ENCODE measurements at regions of chr2 and their contacts with region 1.

Region 1: GRCh38 chr2:105744091-105744908 is 412 bp upstream of the NCK2 start:
- DNase-seq: peak; percentile 82
- ATAC-seq: peak; percentile 90
- H3K4me3 ChIP-seq: peak overlapping the region; percentile 42 to 63 (median 43)
- H3K4me3 Mint-ChIP-seq: peak overlapping the region; percentile 87
- H3K27ac ChIP-seq: peak overlapping the region; percentile 69 to 75
- H3K27ac Mint-ChIP-seq: peak overlapping the region; percentile 92
- H3K4me1 ChIP-seq: peaks cover 56 to 61% of the 10 kb centered on the region in 2 donors
- H3K4me1 Mint-ChIP-seq: peaks cover 71% of the 10 kb centered on the region
- H3K27me3 ChIP-seq: no peaks in the 10 kb centered on the region
- H3K27me3 Mint-ChIP-seq: no peaks in the 10 kb centered on the region
- CTCF ChIP-seq: no peak

Region 2: DNA sequence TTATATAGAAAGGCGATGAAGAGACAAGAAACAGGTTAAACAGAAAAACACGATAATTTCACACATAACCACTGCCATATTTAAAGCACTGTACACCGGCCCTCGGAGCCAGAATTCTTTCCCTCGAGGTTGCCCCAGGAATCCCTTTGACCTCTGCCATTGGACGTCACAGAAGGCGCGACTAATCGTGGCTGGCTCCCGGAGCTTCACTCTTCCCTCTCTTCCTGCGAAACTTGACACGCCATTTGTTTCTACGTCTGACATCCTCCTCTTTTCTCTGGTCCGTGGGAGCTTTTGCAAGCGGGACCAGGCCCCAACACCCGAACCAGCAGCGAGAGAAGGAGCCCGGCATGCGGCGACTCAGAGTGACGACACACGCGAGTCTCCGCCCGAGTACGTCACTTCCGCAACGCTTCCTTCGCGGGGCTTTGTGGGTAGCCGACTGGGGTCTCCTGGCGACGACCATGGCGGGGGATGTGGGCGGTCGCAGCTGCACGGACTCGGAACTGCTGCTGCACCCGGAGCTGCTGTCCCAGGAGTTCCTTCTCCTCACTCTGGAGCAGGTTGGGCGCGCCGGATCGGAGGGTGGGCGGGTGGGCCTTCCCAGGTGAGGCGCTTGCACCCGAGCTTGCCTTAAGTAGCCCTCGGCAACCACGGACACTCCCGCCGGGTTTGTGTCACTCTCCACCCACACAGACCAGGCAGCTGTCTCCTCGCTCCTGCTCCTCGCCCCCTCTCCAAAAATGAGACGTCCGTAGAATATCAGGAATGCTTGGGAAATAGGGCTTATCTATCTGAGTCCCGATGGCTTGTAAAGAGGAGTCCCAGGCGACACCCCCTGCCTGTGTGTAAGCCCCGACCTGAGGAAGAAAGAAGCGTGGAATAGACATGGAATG is 406.9 kb before region 1 on chr2 and contains the start of gene C2orf49:
- CTCF ChIA-PET with region 1: no interaction called
- POLR2A ChIA-PET with region 1: no interaction called
- intact Hi-C with region 1: loop called (anchors 10 kb)
- DNase-seq: peak; percentile 95
- ATAC-seq: peak; percentile 93
- H3K4me3 ChIP-seq: peak within 1 kb of the TSS; percentile 84 to 95 (median 86)
- H3K4me3 Mint-ChIP-seq: peak within 1 kb of the TSS; percentile 100
- H3K27ac ChIP-seq: peak within 1 kb of the TSS; percentile 92 to 98
- H3K27ac Mint-ChIP-seq: peak within 1 kb of the TSS; percentile 99
- H3K4me1 ChIP-seq: peaks cover 17 to 21% of the 10 kb centered on the region in 2 donors
- H3K4me1 Mint-ChIP-seq: peaks cover 27% of the 10 kb centered on the region
- H3K27me3 ChIP-seq: no peaks in the 10 kb centered on the region
- H3K27me3 Mint-ChIP-seq: no peaks in the 10 kb centered on the region
- CTCF ChIP-seq: no peak
- total RNA-seq, gene C2orf49: 29.3 and 32.1 TPM in 2 replicates

Region 3: DNA sequence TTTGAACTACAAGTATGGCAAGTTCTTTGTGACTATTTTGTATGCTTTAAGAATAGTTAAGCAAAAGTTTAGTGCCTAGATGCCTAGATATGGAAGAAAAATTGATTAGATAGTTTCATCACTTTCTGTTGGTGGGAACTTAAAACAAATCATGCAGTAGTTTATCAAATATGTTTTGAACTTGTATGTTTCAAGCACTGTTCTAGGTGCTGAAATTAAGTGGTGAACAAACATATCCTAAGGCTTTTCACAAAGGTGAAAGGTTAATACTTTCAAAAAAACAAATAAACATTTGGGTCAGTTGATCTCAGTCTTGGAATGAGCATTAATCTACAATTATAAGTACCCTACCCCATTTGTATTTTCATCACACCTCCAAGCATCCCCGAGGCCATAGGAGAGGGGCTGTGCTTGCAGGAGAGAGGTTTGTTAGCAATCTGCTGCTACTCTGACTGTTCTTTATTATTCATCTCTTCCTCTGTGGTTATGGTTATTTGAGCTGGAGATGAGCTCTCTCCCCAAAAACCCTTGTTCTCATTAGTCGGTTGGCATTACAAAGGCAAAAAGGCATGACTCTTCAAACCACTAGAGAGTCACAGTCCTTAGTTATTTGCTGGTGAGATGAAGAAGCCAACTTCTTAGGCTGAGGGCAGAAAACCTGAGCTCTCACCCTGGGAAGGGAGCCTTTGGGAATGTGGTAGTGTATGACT is 241.5 kb before region 1 on chr2:
- CTCF ChIA-PET with region 1: no interaction called
- POLR2A ChIA-PET with region 1: no interaction called
- intact Hi-C with region 1: no loop called
- DNase-seq: no peak
- ATAC-seq: no peak
- H3K4me3 ChIP-seq: no peak overlapping the region
- H3K4me3 Mint-ChIP-seq: no peak overlapping the region
- H3K27ac ChIP-seq: no peak overlapping the region
- H3K27ac Mint-ChIP-seq: no peak overlapping the region
- H3K4me1 ChIP-seq: no peaks in the 10 kb centered on the region
- H3K4me1 Mint-ChIP-seq: no peaks in the 10 kb centered on the region
- H3K27me3 ChIP-seq: no peaks in the 10 kb centered on the region
- H3K27me3 Mint-ChIP-seq: peaks cover 26% of the 10 kb centered on the region
- CTCF ChIP-seq: no peak

Region 4: GRCh38 chr2:105802587-105802986 is 58.3 kb after region 1 on chr2:
- CTCF ChIA-PET with region 1: interaction called, 4 read pairs
- POLR2A ChIA-PET with region 1: interaction called, 10 read pairs
- intact Hi-C with region 1: loop called (anchors 2 kb)
- DNase-seq: peak; percentile 86
- ATAC-seq: peak; percentile 75
- H3K4me3 ChIP-seq: peak overlapping the region in 1 of 5 experiments; percentile 16
- H3K4me3 Mint-ChIP-seq: peak overlapping the region; percentile 66
- H3K27ac ChIP-seq: peak overlapping the region; percentile 86 to 92
- H3K27ac Mint-ChIP-seq: peak overlapping the region; percentile 94
- H3K4me1 ChIP-seq: peaks cover 81 to 84% of the 10 kb centered on the region in 2 donors
- H3K4me1 Mint-ChIP-seq: peaks cover 85% of the 10 kb centered on the region
- H3K27me3 ChIP-seq: no peaks in the 10 kb centered on the region
- H3K27me3 Mint-ChIP-seq: no peaks in the 10 kb centered on the region
- CTCF ChIP-seq: no peak

Region 5: GRCh38 chr2:105834931-105835330 is 90.6 kb after region 1 on chr2:
- CTCF ChIA-PET with region 1: no interaction called
- POLR2A ChIA-PET with region 1: no interaction called
- intact Hi-C with region 1: loop called (anchors 5 kb)
- DNase-seq: peak; percentile 83
- ATAC-seq: peak; percentile 83
- H3K4me3 ChIP-seq: peak overlapping the region in 2 of 5 experiments; percentile 13 to 46
- H3K4me3 Mint-ChIP-seq: peak overlapping the region; percentile 30
- H3K27ac ChIP-seq: peak overlapping the region; percentile 90 to 92
- H3K27ac Mint-ChIP-seq: peak overlapping the region; percentile 78
- H3K4me1 ChIP-seq: peaks cover 44 to 49% of the 10 kb centered on the region in 2 donors
- H3K4me1 Mint-ChIP-seq: peaks cover 65% of the 10 kb centered on the region
- H3K27me3 ChIP-seq: no peaks in the 10 kb centered on the region
- H3K27me3 Mint-ChIP-seq: no peaks in the 10 kb centered on the region
- CTCF ChIP-seq: no peak

Region 6: GRCh38 chr2:106193977-106194778 is 449.9 kb after region 1 on chr2 and contains the start of gene UXS1:
- CTCF ChIA-PET with region 1: no interaction called
- POLR2A ChIA-PET with region 1: no interaction called
- intact Hi-C with region 1: loop called (anchors 2 kb)
- DNase-seq: peak; percentile 98
- ATAC-seq: peak; percentile 82
- H3K4me3 ChIP-seq: peak within 1 kb of the TSS; percentile 67 to 96 (median 91)
- H3K4me3 Mint-ChIP-seq: peak within 1 kb of the TSS; percentile 97
- H3K27ac ChIP-seq: peak within 1 kb of the TSS; percentile 66 to 82
- H3K27ac Mint-ChIP-seq: peak within 1 kb of the TSS; percentile 96
- H3K4me1 ChIP-seq: peaks cover 22 to 35% of the 10 kb centered on the region in 2 donors
- H3K4me1 Mint-ChIP-seq: peaks cover 44% of the 10 kb centered on the region
- H3K27me3 ChIP-seq: no peaks in the 10 kb centered on the region
- H3K27me3 Mint-ChIP-seq: peaks cover 9% of the 10 kb centered on the region
- CTCF ChIP-seq: no peak
- total RNA-seq, gene UXS1: 44.8 and 46.3 TPM in 2 replicates

Region 7: DNA sequence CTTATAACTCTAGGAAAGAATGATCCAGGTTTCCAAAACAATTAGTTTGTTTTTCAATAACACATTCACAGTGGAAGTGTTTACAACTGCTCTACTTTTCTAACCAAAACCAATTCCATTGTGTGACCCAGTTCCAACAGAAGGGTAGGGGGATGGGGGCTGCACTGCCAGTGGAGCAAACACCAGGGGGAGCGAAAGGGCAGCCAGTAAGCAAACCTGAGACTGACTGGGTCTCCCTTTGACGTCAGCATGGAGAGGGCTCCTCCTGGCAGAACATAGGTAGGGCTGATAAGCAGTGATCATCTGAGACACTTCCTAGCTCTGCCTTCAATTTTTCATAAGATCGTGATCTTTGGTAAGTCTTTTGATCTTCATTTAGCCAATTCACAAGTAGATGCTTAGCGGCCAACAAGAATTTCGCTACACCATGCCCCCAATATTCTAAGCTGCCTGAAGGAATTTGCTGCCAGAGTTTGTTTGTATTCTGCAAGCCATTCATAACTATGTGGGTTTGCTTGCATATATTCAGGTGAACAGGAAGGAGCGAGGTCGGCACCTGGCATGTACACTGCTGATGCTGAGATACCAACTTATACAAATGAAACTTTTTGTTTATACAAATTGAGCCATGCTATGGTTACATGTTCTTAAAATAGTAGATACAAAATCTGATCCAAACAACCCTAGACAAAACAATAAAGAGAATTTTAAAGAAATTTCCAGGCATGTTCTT is 1095.7 kb after region 1 on chr2:
- CTCF ChIA-PET with region 1: no interaction called
- POLR2A ChIA-PET with region 1: no interaction called
- intact Hi-C with region 1: no loop called
- DNase-seq: no peak
- ATAC-seq: no peak
- H3K4me3 ChIP-seq: no peak overlapping the region
- H3K4me3 Mint-ChIP-seq: no peak overlapping the region
- H3K27ac ChIP-seq: no peak overlapping the region
- H3K27ac Mint-ChIP-seq: no peak overlapping the region
- H3K4me1 ChIP-seq: no peaks in the 10 kb centered on the region
- H3K4me1 Mint-ChIP-seq: no peaks in the 10 kb centered on the region
- H3K27me3 ChIP-seq: no peaks in the 10 kb centered on the region
- H3K27me3 Mint-ChIP-seq: no peaks in the 10 kb centered on the region
- CTCF ChIP-seq: no peak